ENCODE measurements at regions of chr7 and their contacts with region 1.

Region 1: GRCh38 chr7:66894463-66895080 is 26.5 kb upstream of the TMEM248 start:
- DNase-seq: no peak
- ATAC-seq: peak; percentile 74
- H3K4me3 ChIP-seq: no peak overlapping the region
- H3K27ac ChIP-seq: no peak overlapping the region
- H3K4me1 ChIP-seq: no peaks in the 10 kb centered on the region
- H3K27me3 ChIP-seq: no peaks in the 10 kb centered on the region
- CTCF ChIP-seq: peak; percentile 30 to 48 (median 31); a peak in 4 of 6 replicates
- EP300 ChIP-seq: no peak
- POLR2A ChIP-seq: no peak
- RAD21 ChIP-seq: peak; percentile 61

Region 2: GRCh38 chr7:66715676-66716075 is 178.9 kb before region 1 on chr7:
- CTCF ChIA-PET with region 1: no interaction called
- POLR2A ChIA-PET with region 1: no interaction called
- RAD21 ChIA-PET with region 1: no interaction called
- SMC1A ChIA-PET with region 1: no interaction called
- in situ Hi-C with region 1: no loop called
- intact Hi-C with region 1: no loop called
- DNase-seq: no peak
- ATAC-seq: no peak
- H3K4me3 ChIP-seq: no peak overlapping the region
- H3K27ac ChIP-seq: no peak overlapping the region
- H3K4me1 ChIP-seq: no peaks in the 10 kb centered on the region
- H3K27me3 ChIP-seq: no peaks in the 10 kb centered on the region
- CTCF ChIP-seq: no peak
- EP300 ChIP-seq: no peak
- POLR2A ChIP-seq: no peak
- RAD21 ChIP-seq: no peak

Region 3: GRCh38 chr7:66837007-66837406 is 57.6 kb before region 1 on chr7:
- CTCF ChIA-PET with region 1: no interaction called
- POLR2A ChIA-PET with region 1: no interaction called
- RAD21 ChIA-PET with region 1: no interaction called
- SMC1A ChIA-PET with region 1: no interaction called
- in situ Hi-C with region 1: no loop called
- intact Hi-C with region 1: loop called (anchors 2 kb)
- DNase-seq: no peak
- ATAC-seq: peak; percentile 90
- H3K4me3 ChIP-seq: no peak overlapping the region
- H3K27ac ChIP-seq: no peak overlapping the region
- H3K4me1 ChIP-seq: no peaks in the 10 kb centered on the region
- H3K27me3 ChIP-seq: no peaks in the 10 kb centered on the region
- CTCF ChIP-seq: peak; percentile 19 to 57 (median 57); a peak in 5 of 6 replicates
- EP300 ChIP-seq: no peak
- POLR2A ChIP-seq: no peak
- RAD21 ChIP-seq: peak; percentile 41

Region 4: DNA sequence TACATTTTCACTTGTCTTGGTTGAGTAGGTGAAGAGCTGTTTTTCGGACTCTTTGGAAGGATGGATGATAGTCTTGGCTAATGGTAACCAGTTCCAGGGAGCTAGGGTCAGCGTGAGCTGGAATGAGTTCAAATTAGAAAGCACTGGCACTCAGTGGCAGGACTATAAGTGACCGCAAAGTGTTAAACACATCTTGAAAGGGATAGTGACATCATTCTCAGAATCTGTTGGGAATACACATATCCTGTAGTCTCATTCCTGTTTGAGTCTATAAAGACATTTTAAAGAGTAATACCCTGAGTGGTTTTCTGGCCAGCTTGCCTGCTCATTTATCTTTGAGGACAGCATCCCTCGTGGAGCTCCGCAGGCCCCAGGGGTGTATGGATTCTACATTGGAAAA is 30.3 kb before region 1 on chr7:
- CTCF ChIA-PET with region 1: no interaction called
- POLR2A ChIA-PET with region 1: no interaction called
- RAD21 ChIA-PET with region 1: no interaction called
- SMC1A ChIA-PET with region 1: no interaction called
- in situ Hi-C with region 1: no loop called
- intact Hi-C with region 1: no loop called
- DNase-seq: no peak
- ATAC-seq: no peak
- H3K4me3 ChIP-seq: no peak overlapping the region
- H3K27ac ChIP-seq: no peak overlapping the region
- H3K4me1 ChIP-seq: 0 out of 2 replicates have a peak, but pooled peaks cover 2% of the 10 kb centered on the region
- H3K27me3 ChIP-seq: no peaks in the 10 kb centered on the region
- CTCF ChIP-seq: no peak
- EP300 ChIP-seq: no peak
- POLR2A ChIP-seq: no peak
- RAD21 ChIP-seq: no peak

Region 5: GRCh38 chr7:66907731-66908130 is 13.2 kb after region 1 on chr7:
- CTCF ChIA-PET with region 1: interaction called, 8 read pairs
- POLR2A ChIA-PET with region 1: no interaction called
- RAD21 ChIA-PET with region 1: no interaction called
- SMC1A ChIA-PET with region 1: interaction called, 5 read pairs
- in situ Hi-C with region 1: no loop called
- intact Hi-C with region 1: loop called (anchors 2 kb)
- DNase-seq: no peak
- ATAC-seq: no peak
- H3K4me3 ChIP-seq: no peak overlapping the region
- H3K27ac ChIP-seq: no peak overlapping the region
- H3K4me1 ChIP-seq: no peaks in the 10 kb centered on the region
- H3K27me3 ChIP-seq: no peaks in the 10 kb centered on the region
- CTCF ChIP-seq: no peak
- EP300 ChIP-seq: no peak
- POLR2A ChIP-seq: no peak
- RAD21 ChIP-seq: no peak

Measured in GM12878 (cell line).